Activated CD8-positive, alpha-beta T cell treated with anti-CD3 and anti-CD28 coated beads, Interleukin-2, amount 10 ng/mL, durations not matched to agents 7 days and 5 days (primary cell): ENCODE measurements at regions of chr19 and their contacts with region 1.

Region 1: DNA sequence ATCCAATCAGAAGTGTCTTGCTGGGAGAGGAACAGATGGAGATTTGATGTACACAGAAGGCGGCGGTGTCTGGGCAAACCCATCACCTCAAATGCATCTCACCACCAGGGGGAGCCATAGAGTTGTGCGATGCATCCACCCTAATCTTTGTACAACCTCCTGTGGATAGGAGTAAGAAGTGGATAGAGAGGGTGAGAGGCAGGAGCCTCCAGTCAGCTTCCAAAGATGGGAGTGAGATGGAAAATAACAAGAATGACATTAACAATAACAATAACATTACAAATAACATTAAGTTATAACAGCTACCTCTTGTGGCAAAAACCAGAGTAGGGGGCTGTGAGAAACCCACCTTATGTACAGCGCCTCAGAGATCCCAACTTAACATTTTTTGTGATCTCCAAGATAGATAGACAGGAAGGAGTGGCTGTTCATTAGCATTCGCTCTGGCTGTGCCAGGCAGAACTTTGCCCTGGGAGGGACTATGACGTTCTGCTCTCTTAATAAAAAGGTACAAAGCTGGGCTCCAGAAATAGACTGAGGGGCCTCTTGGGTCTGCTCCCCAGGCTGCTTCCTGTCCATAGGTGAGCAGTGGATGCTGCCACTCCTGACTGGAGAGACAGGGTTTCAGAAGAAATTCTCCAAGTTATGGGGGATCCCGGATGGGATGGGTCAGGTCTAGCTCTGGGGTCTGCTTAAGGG is 5.2 kb upstream of the CEACAM18 start:
- DNase-seq: peak; percentile 89
- ATAC-seq: peak; percentile 79
- H3K4me3 Mint-ChIP-seq: no peak overlapping the region
- H3K27ac Mint-ChIP-seq: no peak overlapping the region
- H3K4me1 Mint-ChIP-seq: peaks cover 10% of the 10 kb centered on the region
- H3K27me3 Mint-ChIP-seq: peaks cover 14% of the 10 kb centered on the region

Region 2: DNA sequence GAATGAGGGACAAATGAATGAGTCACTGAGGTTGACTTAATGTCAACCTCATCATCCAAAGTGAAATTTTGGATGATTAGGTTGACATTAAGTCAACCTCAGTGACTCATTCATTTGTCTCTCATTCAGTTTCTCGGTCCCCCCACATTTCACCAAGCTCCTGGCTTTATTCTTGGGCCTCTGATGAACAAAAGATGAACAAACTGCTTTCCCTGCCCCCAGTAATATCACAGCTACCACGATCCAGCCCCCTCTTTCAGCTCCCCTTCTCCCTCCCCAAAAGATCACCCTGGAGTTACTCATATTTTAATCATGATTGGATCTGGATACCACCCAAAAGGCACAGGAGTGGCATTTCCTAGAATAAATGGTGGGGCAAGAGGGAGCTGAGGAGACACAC is 16.0 kb after region 1 on chr19:
- CTCF ChIA-PET with region 1: interaction called, 21 read pairs
- POLR2A ChIA-PET with region 1: no interaction called
- DNase-seq: no peak
- ATAC-seq: no peak
- H3K4me3 Mint-ChIP-seq: no peak overlapping the region
- H3K27ac Mint-ChIP-seq: no peak overlapping the region
- H3K4me1 Mint-ChIP-seq: peaks cover 6% of the 10 kb centered on the region
- H3K27me3 Mint-ChIP-seq: peaks cover 16% of the 10 kb centered on the region

Region 3: GRCh38 chr19:51514866-51515481 is 41.8 kb after region 1 on chr19:
- CTCF ChIA-PET with region 1: interaction called, 53 read pairs
- POLR2A ChIA-PET with region 1: no interaction called
- DNase-seq: peak; percentile 49
- ATAC-seq: peak; percentile 63
- H3K4me3 Mint-ChIP-seq: no peak overlapping the region
- H3K27ac Mint-ChIP-seq: no peak overlapping the region
- H3K4me1 Mint-ChIP-seq: peaks cover 6% of the 10 kb centered on the region
- H3K27me3 Mint-ChIP-seq: peaks cover 20% of the 10 kb centered on the region

Region 4: DNA sequence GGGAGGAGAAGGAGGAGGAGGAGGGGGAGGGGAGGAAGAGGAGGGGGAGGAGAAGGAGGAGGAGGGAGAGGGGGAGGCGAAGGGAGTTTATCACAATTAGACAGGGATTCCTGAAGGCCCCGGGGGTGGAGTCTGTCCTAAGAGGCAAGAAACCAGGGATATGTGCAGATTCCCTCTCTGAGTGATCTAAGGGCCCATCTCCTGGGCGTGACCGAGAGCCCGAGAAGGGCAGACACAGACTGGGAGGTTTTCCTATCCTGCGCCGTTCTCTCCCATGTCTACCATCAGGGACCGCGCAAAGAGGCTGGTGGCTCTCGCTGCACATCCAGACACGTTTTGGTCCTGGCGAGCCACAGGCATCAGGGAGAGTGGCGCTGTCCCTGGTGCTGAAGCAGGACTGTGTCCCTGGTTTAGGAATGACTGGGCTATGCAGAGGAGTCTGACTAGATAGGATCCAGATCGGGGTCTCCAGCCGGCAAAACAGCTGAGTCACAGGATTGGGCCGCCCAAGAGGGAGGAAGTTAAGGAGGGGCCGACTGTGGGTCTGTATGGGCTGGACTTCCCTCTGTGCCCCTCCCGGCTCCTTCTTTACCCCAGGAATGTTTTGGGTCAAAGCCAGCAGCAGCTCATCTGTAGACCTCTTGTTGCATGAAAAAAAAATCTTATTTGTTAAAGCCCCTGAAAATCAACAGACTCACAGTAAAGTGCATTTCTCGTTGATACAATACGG is 80.0 kb after region 1 on chr19:
- CTCF ChIA-PET with region 1: no interaction called
- POLR2A ChIA-PET with region 1: no interaction called
- DNase-seq: peak; percentile 64
- ATAC-seq: no peak
- H3K4me3 Mint-ChIP-seq: no peak overlapping the region
- H3K27ac Mint-ChIP-seq: no peak overlapping the region
- H3K4me1 Mint-ChIP-seq: peaks cover 43% of the 10 kb centered on the region
- H3K27me3 Mint-ChIP-seq: peaks cover 30% of the 10 kb centered on the region

Region 5: DNA sequence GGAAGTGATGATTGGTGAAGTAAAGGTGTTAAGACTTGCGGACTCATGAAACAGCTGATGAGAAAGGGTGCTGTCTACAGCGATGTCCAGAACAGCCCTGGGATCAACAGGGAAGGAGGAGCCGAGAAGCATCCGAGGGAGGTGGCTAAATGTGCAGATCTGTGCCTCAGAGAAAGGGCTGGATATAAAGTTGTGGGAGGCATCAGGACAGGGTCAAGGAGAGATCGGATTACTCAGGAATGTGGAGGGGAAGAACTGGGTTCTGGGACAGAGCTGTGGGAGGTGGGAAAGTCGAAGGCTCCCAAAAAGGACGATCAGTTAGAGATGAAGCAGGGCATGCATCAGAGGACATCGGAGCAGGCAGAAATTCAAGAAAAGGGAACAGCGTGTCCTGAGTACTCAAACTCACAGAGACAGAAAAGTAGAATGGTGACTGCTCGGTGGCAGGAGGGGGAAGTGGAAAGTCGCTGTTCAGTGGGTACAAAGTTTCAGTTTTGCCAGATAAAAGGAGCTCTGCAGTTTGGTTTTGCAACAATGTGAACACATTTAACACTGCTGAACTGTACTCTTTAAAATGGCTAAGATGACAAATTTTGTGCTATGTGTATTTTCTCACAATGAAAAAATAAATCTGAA is 171.6 kb after region 1 on chr19:
- CTCF ChIA-PET with region 1: interaction called, 10 read pairs
- POLR2A ChIA-PET with region 1: no interaction called
- DNase-seq: no peak
- ATAC-seq: no peak
- H3K4me3 Mint-ChIP-seq: no peak overlapping the region
- H3K27ac Mint-ChIP-seq: no peak overlapping the region
- H3K4me1 Mint-ChIP-seq: no peaks in the 10 kb centered on the region
- H3K27me3 Mint-ChIP-seq: peaks cover 27% of the 10 kb centered on the region